Natural killer cell (primary cell): ENCODE measurements at regions of chr3 and their contacts with region 1.

Region 1: DNA sequence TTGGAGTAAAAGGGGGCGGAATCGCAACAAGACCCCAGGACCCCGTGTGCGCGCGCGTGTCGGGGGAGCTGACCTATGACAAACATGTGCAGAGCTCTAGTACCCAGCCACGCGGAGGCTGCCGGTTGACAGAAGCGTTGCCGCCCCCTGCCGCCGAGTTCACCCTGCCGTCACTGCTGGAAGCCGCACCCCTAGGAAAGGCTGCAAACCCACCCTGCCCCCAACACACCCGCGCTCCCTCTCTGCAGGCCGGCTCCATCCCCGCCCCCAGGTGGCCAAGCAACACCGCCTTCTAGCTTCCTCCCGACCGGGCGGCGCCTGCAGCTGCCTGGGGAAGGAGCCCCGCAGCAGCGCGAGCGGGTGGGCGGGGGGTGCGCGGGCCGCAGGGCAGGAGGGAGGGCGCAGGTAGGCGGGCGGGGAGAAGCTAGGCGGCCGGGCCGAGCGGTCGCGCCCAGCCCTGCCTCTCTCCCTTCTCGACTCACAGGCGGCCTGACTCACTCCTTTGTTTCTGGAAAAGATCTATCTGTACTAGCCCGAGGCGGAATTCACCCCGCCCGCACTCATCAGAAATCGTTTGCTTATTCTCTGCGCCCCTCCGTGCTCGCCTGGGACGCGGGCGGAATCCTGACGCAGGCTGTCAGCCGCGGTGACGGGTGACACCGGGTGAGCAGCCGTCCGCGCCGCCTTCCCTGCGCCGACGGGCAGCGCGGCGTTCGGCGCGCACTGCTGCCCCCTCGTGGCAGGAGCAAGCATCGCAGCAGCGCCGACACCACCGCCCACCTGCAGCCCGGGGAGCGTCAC is 160.8 kb downstream of the GAP43 start:
- DNase-seq: peak; percentile 86 to 96
- ATAC-seq: peak; percentile 81 to 94 (median 87)
- H3K4me3 ChIP-seq: peak overlapping the region; percentile 70
- H3K4me3 Mint-ChIP-seq: peak overlapping the region; percentile 93
- H3K27ac ChIP-seq: peak overlapping the region; percentile 99
- H3K27ac Mint-ChIP-seq: peak overlapping the region; percentile 89 to 91
- H3K4me1 ChIP-seq: peaks cover 10% of the 10 kb centered on the region
- H3K4me1 Mint-ChIP-seq: peaks cover 12% of the 10 kb centered on the region in 2 donors
- H3K27me3 ChIP-seq: peaks cover 3% of the 10 kb centered on the region
- H3K27me3 Mint-ChIP-seq: peaks cover 8 to 15% of the 10 kb centered on the region in 2 donors
- CTCF ChIP-seq: peak; percentile 89

Region 2: GRCh38 chr3:115092220-115092791 is 691.8 kb before region 1 on chr3:
- intact Hi-C with region 1: loop called (anchors 2 kb)
- DNase-seq: peak; percentile 35 to 81
- ATAC-seq: peak; percentile 64 to 70 (median 67)
- H3K4me3 ChIP-seq: no peak overlapping the region
- H3K4me3 Mint-ChIP-seq: no peak overlapping the region
- H3K27ac ChIP-seq: no peak overlapping the region
- H3K27ac Mint-ChIP-seq: no peak overlapping the region
- H3K4me1 ChIP-seq: no peaks in the 10 kb centered on the region
- H3K4me1 Mint-ChIP-seq: no peaks in the 10 kb centered on the region
- H3K27me3 ChIP-seq: no peaks in the 10 kb centered on the region
- H3K27me3 Mint-ChIP-seq: no peaks in the 10 kb centered on the region
- CTCF ChIP-seq: peak; percentile 79

Region 3: GRCh38 chr3:115204475-115204874 is 579.7 kb before region 1 on chr3:
- intact Hi-C with region 1: no loop called
- DNase-seq: no peak
- ATAC-seq: no peak
- H3K4me3 ChIP-seq: no peak overlapping the region
- H3K4me3 Mint-ChIP-seq: no peak overlapping the region
- H3K27ac ChIP-seq: no peak overlapping the region
- H3K27ac Mint-ChIP-seq: no peak overlapping the region
- H3K4me1 ChIP-seq: no peaks in the 10 kb centered on the region
- H3K4me1 Mint-ChIP-seq: no peaks in the 10 kb centered on the region
- H3K27me3 ChIP-seq: no peaks in the 10 kb centered on the region
- H3K27me3 Mint-ChIP-seq: peaks cover 0 to 6% of the 10 kb centered on the region in 2 donors
- CTCF ChIP-seq: no peak

Region 4: DNA sequence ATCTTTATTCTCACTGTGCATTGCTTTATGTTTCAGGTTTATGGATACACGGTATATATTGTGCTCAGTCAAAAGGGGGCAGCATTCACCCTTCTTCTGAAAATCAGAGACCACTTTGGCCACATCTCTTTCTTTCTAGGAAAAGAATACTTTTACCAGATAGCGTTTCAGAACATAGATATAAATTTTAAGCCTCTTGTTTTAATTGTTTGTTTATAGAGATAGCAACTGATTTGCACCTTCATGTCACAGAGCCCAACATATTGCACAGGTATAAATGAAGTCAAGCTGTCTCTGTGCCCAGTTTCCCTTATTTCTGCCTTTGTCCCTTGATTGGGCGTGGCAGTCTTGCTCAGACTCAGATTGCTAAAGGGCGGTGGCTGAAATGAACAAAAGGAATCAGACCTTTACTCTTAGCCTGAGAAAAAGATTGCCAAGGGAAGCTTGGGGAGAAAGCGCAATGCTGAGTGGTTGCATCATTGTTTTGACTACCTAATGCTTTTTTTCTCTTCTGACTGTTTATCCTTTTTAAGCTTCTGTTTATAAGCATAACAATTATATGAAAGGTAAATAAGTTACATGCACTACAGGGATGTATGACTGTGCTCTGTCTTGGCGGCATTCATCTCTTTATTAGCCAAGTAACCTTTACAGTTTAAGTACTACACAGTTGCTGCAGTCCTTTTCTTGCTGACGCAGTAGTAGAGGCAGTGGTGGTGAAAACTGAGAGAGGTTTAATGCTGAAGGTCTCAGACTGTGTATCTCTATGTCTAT is 566.3 kb before region 1 on chr3:
- intact Hi-C with region 1: loop called (anchors 2 kb)
- DNase-seq: peak in 1 of 2 donors; percentile 50
- ATAC-seq: peak in 1 of 3 donors; percentile 52
- H3K4me3 ChIP-seq: no peak overlapping the region
- H3K4me3 Mint-ChIP-seq: no peak overlapping the region
- H3K27ac ChIP-seq: no peak overlapping the region
- H3K27ac Mint-ChIP-seq: no peak overlapping the region
- H3K4me1 ChIP-seq: no peaks in the 10 kb centered on the region
- H3K4me1 Mint-ChIP-seq: no peaks in the 10 kb centered on the region
- H3K27me3 ChIP-seq: no peaks in the 10 kb centered on the region
- H3K27me3 Mint-ChIP-seq: peaks cover 9 to 35% of the 10 kb centered on the region in 2 donors
- CTCF ChIP-seq: peak; percentile 21

Region 5: GRCh38 chr3:115658337-115659181 is 125.6 kb before region 1 on chr3:
- intact Hi-C with region 1: loop called (anchors 5 kb)
- DNase-seq: peak; percentile 65 to 80
- ATAC-seq: peak; percentile 85 to 88 (median 86)
- H3K4me3 ChIP-seq: peak overlapping the region; percentile 71
- H3K4me3 Mint-ChIP-seq: peak overlapping the region; percentile 91
- H3K27ac ChIP-seq: peak overlapping the region; percentile 89
- H3K27ac Mint-ChIP-seq: peak overlapping the region; percentile 85 to 94
- H3K4me1 ChIP-seq: peaks cover 14% of the 10 kb centered on the region
- H3K4me1 Mint-ChIP-seq: peaks cover 21 to 22% of the 10 kb centered on the region in 2 donors
- H3K27me3 ChIP-seq: peaks cover 1% of the 10 kb centered on the region
- H3K27me3 Mint-ChIP-seq: peaks cover 0 to 18% of the 10 kb centered on the region in 2 donors
- CTCF ChIP-seq: no peak

Region 6: GRCh38 chr3:115720983-115721382 is 63.2 kb before region 1 on chr3:
- intact Hi-C with region 1: no loop called
- DNase-seq: no peak
- ATAC-seq: no peak
- H3K4me3 ChIP-seq: no peak overlapping the region
- H3K4me3 Mint-ChIP-seq: no peak overlapping the region
- H3K27ac ChIP-seq: no peak overlapping the region
- H3K27ac Mint-ChIP-seq: no peak overlapping the region
- H3K4me1 ChIP-seq: no peaks in the 10 kb centered on the region
- H3K4me1 Mint-ChIP-seq: no peaks in the 10 kb centered on the region
- H3K27me3 ChIP-seq: peaks cover 9% of the 10 kb centered on the region
- H3K27me3 Mint-ChIP-seq: peaks cover 12 to 14% of the 10 kb centered on the region in 2 donors
- CTCF ChIP-seq: no peak

Region 7: DNA sequence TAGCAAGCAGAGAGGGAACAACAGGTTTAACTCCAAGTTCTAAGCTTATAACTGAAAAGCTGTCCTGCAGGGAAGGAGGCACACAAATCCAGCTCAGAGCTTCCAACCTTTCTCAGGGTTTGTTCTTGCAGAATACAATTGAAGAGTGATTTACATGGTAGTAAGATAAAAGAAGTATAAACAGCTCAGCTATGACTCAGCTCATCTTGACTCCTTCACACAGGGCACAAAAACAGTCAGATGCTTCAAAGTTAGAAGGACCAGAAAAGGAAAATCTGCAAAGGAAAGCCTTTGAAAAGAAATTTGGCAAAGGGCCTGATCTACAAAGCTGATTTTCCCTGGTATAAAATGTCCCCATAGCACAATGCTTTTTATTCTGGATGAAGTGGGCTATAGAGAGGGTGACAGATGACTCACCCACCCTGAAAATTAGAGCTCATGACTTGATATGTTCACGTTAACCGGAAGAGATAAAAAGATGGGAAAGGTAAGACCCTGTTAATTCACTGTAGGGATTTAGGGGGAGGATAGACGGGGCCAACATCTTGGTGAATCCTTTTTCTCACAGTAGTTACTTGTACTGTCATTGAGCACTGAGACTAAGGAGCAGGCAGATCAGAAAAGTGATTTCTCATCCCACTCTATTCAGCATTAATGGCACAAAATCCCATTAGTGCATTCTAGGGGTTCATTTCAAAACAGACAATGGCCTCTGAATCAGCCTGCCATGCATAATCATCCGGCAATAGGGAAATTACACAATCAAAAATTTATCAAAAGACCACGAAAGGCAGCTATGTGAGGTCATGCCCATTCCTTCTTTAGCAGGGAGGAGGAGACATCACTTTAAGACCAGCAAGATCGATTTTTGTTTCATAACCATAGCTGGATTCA is 17.3 kb before region 1 on chr3:
- intact Hi-C with region 1: no loop called
- DNase-seq: no peak
- ATAC-seq: no peak
- H3K4me3 ChIP-seq: no peak overlapping the region
- H3K4me3 Mint-ChIP-seq: no peak overlapping the region
- H3K27ac ChIP-seq: no peak overlapping the region
- H3K27ac Mint-ChIP-seq: no peak overlapping the region
- H3K4me1 ChIP-seq: no peaks in the 10 kb centered on the region
- H3K4me1 Mint-ChIP-seq: no peaks in the 10 kb centered on the region
- H3K27me3 ChIP-seq: no peaks in the 10 kb centered on the region
- H3K27me3 Mint-ChIP-seq: peaks cover 19 to 25% of the 10 kb centered on the region in 2 donors
- CTCF ChIP-seq: no peak

Region 8: DNA sequence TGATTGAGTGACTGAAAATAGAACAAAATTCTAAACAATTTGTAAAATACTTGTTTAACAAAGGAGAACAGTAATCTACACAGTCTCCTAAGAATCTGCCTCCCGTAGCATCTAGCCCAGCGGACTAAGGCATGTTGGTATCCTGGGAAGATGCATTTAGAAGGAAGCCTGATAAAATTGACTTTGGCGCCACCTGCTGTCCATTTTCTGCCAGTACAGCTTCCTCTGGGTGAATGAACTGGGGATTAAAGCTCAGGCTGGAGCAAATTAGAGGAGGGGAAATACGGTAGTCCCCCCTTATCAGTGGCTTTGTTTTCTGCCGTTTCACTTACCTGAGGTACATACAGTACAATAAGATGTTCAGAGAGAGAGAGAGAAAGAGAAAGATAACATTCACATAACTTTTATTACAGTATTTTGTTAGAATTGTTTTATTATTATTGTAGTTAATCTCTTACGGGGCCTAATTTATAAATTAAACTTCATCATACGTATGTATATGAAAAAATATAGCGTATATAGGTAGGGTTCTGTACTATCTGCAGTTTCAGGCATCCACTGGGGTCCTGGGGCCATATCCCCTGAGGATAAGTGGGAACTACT is 30.7 kb after region 1 on chr3:
- intact Hi-C with region 1: loop called (anchors 2 kb)
- DNase-seq: peak; percentile 56 to 80
- ATAC-seq: peak; percentile 49 to 72 (median 62)
- H3K4me3 ChIP-seq: no peak overlapping the region
- H3K4me3 Mint-ChIP-seq: no peak overlapping the region
- H3K27ac ChIP-seq: no peak overlapping the region
- H3K27ac Mint-ChIP-seq: no peak overlapping the region
- H3K4me1 ChIP-seq: no peaks in the 10 kb centered on the region
- H3K4me1 Mint-ChIP-seq: no peaks in the 10 kb centered on the region
- H3K27me3 ChIP-seq: no peaks in the 10 kb centered on the region
- H3K27me3 Mint-ChIP-seq: peaks cover 10 to 11% of the 10 kb centered on the region in 2 donors
- CTCF ChIP-seq: peak; percentile 96